Activated CD4-positive, alpha-beta T cell treated with anti-CD3 and anti-CD28 coated beads for 36 hours (primary cell): ENCODE measurements at regions of chr3 and their contacts with region 1.

Region 1: DNA sequence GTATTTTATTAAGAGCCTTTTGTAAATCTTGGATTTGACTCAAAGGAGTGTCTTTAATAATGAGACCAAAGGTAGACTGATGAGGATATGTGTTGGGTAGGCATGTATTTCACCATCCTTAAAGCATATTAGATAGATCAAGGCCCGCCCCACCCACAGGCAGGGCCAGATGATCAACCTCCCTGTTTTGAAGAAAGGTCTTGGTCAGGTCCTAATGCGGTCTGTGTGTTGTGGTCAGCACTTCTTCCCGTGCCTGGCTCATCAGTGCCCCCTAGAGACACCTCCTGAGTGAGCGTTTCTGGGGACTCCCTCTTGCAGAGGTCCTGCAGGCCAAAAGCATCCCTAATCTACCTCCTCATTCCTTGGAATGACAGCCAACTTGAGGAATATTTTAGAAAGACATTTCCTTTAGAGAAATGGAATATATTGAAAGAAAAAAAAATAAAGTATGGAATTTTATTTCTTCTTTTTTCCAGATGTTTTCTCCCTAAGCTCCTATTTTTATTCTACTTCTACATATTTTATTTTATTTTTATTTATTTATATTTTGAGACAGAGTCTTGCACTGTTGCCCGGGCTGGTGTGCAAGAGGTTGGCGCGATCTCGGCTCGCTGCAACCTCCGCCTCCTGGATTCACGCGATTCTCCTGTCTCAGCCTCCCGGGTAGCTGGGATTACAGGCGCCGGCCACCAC is 6.0 kb downstream of the TM4SF4 start:
- DNase-seq: peak; percentile 70
- ATAC-seq: peak; percentile 51
- H3K4me3 Mint-ChIP-seq: no peak overlapping the region
- H3K27ac Mint-ChIP-seq: no peak overlapping the region
- H3K4me1 Mint-ChIP-seq: no peaks in the 10 kb centered on the region
- H3K27me3 Mint-ChIP-seq: peaks cover 2% of the 10 kb centered on the region

Region 2: DNA sequence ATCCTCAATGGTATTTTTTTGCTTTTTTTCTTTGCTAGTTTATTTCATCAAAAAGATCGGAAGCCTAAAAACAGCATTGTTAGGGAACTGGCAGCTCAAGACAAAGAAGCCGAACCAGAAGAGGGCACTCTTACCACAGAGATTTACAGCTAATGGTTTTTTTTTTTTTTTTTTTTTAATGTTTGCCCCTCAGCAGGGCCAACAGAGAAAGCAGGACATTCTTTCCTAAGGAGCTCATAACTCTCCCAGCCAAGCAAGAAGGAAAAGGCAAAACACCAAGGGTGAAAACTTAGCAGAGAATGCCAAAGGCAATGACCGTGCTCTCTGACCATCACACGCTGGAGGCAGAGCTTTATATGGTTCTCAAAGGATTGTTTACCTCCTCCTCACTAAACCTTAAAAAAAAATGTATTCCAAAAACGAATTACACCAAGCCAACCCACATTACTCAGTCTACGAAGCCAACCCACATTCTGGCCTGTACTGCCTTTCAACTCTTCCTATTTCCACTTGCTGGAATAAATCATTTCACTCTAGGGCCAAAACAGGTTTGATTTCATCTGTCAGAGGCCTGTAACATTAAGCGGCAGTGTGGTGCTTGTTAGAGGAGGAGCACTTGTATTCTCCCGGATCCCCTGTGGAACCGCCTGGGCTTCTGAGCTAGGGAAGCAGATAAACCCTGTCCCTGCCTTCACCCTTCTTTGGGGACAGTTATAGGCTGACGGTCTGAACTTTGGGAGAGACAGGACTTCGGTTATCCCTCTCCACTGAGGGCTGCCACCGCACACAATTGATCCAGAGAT is 524.7 kb before region 1 on chr3:
- CTCF ChIA-PET with region 1: no interaction called
- POLR2A ChIA-PET with region 1: no interaction called
- intact Hi-C with region 1: loop called in 1 of 2 experiments (anchors 10 kb)
- DNase-seq: peak; percentile 42
- ATAC-seq: peak; percentile 23
- H3K4me3 Mint-ChIP-seq: no peak overlapping the region
- H3K27ac Mint-ChIP-seq: no peak overlapping the region
- H3K4me1 Mint-ChIP-seq: peaks cover 2% of the 10 kb centered on the region
- H3K27me3 Mint-ChIP-seq: no peaks in the 10 kb centered on the region

Region 3: GRCh38 chr3:149174901-149175300 is 305.6 kb before region 1 on chr3:
- CTCF ChIA-PET with region 1: no interaction called
- POLR2A ChIA-PET with region 1: no interaction called
- intact Hi-C with region 1: no loop called
- DNase-seq: peak; percentile 32
- ATAC-seq: peak; percentile 91
- H3K4me3 Mint-ChIP-seq: no peak overlapping the region
- H3K27ac Mint-ChIP-seq: no peak overlapping the region
- H3K4me1 Mint-ChIP-seq: peaks cover 7% of the 10 kb centered on the region
- H3K27me3 Mint-ChIP-seq: no peaks in the 10 kb centered on the region

Region 4: GRCh38 chr3:149352556-149352955 is 127.9 kb before region 1 on chr3:
- CTCF ChIA-PET with region 1: no interaction called
- POLR2A ChIA-PET with region 1: no interaction called
- intact Hi-C with region 1: loop called (anchors 1 to 2 kb)
- DNase-seq: peak; percentile 56
- ATAC-seq: peak; percentile 81
- H3K4me3 Mint-ChIP-seq: no peak overlapping the region
- H3K27ac Mint-ChIP-seq: no peak overlapping the region
- H3K4me1 Mint-ChIP-seq: no peaks in the 10 kb centered on the region
- H3K27me3 Mint-ChIP-seq: peaks cover 9% of the 10 kb centered on the region

Region 5: GRCh38 chr3:149393345-149394160 is 86.9 kb before region 1 on chr3:
- CTCF ChIA-PET with region 1: no interaction called
- POLR2A ChIA-PET with region 1: no interaction called
- intact Hi-C with region 1: loop called in 1 of 2 experiments (anchors 1 kb)
- DNase-seq: peak; percentile 69
- ATAC-seq: peak; percentile 57
- H3K4me3 Mint-ChIP-seq: no peak overlapping the region
- H3K27ac Mint-ChIP-seq: no peak overlapping the region
- H3K4me1 Mint-ChIP-seq: no peaks in the 10 kb centered on the region
- H3K27me3 Mint-ChIP-seq: peaks cover 5% of the 10 kb centered on the region

Region 6: DNA sequence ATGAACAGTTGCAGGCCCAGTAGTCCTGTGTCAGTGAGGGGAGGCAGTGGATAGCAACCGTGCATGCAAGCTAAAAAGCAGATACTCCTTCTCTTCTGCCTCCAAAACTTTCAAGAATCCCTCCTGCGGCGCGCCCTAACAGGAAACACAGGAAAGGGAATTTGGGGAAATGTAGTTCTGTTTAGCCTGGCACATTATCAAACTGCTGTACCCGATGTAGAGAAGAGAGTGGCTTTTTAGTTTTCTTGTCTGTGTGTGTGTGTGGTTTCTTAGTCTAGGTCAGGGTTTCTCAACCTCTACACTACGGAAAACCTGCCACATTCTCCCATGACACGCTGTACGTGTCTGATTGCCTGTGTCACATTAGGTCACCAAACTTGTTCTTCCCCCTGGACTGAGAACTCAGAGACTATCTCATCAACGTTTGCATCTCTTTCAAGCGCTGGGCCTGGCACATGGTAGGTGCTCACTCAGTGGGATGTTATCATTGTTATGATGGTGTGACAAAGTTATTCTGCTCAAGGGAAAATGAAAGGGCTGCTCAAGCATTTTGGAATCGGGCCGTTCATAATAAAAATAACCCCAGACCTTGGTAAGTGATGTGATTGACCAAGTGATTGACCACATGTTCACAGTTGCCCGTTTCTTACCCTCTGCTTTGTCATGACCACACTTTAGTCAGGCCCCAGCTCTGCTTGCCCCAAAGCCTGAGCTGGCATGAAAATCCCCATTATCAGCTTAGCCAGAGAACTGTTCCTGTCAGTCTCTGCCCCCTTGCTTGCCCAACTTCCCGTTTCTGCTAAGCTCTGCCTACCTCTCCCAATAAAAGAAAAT is 27.2 kb after region 1 on chr3:
- CTCF ChIA-PET with region 1: no interaction called
- POLR2A ChIA-PET with region 1: no interaction called
- intact Hi-C with region 1: no loop called
- DNase-seq: peak; percentile 45
- ATAC-seq: peak; percentile 83
- H3K4me3 Mint-ChIP-seq: peak overlapping the region; percentile 1
- H3K27ac Mint-ChIP-seq: peak overlapping the region; percentile 67
- H3K4me1 Mint-ChIP-seq: peaks cover 17% of the 10 kb centered on the region
- H3K27me3 Mint-ChIP-seq: peaks cover 18% of the 10 kb centered on the region

Region 7: GRCh38 chr3:149554826-149555225 is 74.4 kb after region 1 on chr3:
- CTCF ChIA-PET with region 1: no interaction called
- POLR2A ChIA-PET with region 1: no interaction called
- intact Hi-C with region 1: no loop called
- DNase-seq: no peak
- ATAC-seq: no peak
- H3K4me3 Mint-ChIP-seq: no peak overlapping the region
- H3K27ac Mint-ChIP-seq: no peak overlapping the region
- H3K4me1 Mint-ChIP-seq: peaks cover 4% of the 10 kb centered on the region
- H3K27me3 Mint-ChIP-seq: peaks cover 8% of the 10 kb centered on the region